Activated B cell treated with CpG ODN at 0.5 μM for 24 hours (primary cell): ENCODE measurements at regions of chr21 and their contacts with region 1.

Region 1: GRCh38 chr21:34908419-34909055 is 140.6 kb downstream of the RUNX1 start:
- DNase-seq: no peak
- ATAC-seq: peak; percentile 40
- H3K4me3 Mint-ChIP-seq: peak overlapping the region; percentile 3
- H3K27ac Mint-ChIP-seq: no peak overlapping the region
- H3K4me1 Mint-ChIP-seq: peaks cover 66% of the 10 kb centered on the region
- H3K27me3 Mint-ChIP-seq: no peaks in the 10 kb centered on the region
- CTCF ChIP-seq: no peak

Region 2: DNA sequence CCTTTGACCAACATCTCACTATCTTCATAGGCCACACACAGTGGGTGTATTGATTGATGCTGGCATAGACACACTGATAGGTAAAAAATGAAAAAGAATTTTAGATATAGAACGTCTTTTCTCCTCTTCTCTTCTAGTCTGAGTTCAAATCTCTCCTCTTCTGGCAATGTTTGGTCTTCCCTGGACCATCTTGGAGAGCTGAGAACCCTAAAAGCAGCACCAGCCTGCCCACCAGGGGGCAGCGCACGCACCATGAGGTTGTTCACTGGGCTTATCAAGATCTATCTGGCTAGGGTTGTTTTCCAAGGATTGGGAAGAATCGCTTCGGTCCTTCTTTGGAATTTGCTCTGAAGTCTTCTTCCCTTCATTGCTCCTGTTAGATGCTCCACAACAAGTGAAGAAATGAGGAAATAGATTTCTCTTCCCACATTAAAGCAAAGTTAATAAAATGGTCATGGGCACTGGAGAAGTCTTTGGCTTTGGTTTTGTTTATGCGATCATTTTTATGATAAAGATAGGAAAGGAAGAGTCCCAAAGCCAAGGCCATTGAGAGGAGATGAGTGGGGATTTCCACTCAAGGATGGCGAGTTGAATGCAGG is 1986.8 kb before region 1 on chr21:
- CTCF ChIA-PET with region 1: no interaction called
- POLR2A ChIA-PET with region 1: no interaction called
- intact Hi-C with region 1: no loop called
- DNase-seq: peak; percentile 26
- ATAC-seq: peak; percentile 40
- H3K4me3 Mint-ChIP-seq: no peak overlapping the region
- H3K27ac Mint-ChIP-seq: no peak overlapping the region
- H3K4me1 Mint-ChIP-seq: no peaks in the 10 kb centered on the region
- H3K27me3 Mint-ChIP-seq: peaks cover 20% of the 10 kb centered on the region
- CTCF ChIP-seq: peak; percentile 44

Region 3: GRCh38 chr21:34807881-34808568 is 100.5 kb before region 1 on chr21:
- CTCF ChIA-PET with region 1: no interaction called
- POLR2A ChIA-PET with region 1: no interaction called
- intact Hi-C with region 1: no loop called
- DNase-seq: no peak
- ATAC-seq: peak; percentile 13
- H3K4me3 Mint-ChIP-seq: no peak overlapping the region
- H3K27ac Mint-ChIP-seq: peak overlapping the region; percentile 71
- H3K4me1 Mint-ChIP-seq: peaks cover 46% of the 10 kb centered on the region
- H3K27me3 Mint-ChIP-seq: no peaks in the 10 kb centered on the region
- CTCF ChIP-seq: no peak

Region 4: DNA sequence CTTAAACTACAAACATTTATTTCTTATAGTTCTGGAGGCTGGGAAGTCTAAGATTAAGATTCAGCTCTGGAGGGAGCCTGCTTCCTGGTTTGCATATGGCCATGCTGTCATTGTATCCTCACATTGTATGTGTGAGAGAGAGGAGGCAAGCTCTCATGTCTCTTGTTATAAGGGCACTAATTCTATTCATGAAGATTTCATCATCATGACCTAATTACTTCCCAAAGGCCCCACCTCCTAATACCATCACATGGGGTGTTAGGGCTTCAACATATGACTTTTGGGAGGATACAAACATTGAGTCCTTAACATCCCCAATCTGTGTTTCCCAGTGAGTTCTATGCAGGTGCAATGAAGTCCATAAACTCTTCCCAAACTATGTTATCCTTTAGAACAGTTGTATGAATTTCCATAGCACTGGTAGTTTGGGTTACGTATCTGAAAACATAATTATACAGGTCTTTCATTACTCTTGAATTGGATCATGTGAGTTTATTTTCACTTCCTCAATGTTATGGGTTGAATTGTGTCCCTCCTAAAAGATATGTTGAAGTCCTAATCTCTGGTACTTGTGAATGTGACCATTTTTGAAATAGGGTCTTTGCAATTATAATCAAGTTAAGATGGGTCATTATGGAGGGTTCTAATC is 16.4 kb after region 1 on chr21:
- CTCF ChIA-PET with region 1: no interaction called
- POLR2A ChIA-PET with region 1: interaction called, 3 read pairs
- intact Hi-C with region 1: loop called (anchors 2 kb)
- DNase-seq: no peak
- ATAC-seq: peak; percentile 89
- H3K4me3 Mint-ChIP-seq: peak overlapping the region; percentile 66
- H3K27ac Mint-ChIP-seq: peak overlapping the region; percentile 78
- H3K4me1 Mint-ChIP-seq: peaks cover 67% of the 10 kb centered on the region
- H3K27me3 Mint-ChIP-seq: no peaks in the 10 kb centered on the region
- CTCF ChIP-seq: no peak

Region 5: GRCh38 chr21:35352066-35352770 is 443.7 kb after region 1 on chr21:
- CTCF ChIA-PET with region 1: no interaction called
- POLR2A ChIA-PET with region 1: no interaction called
- intact Hi-C with region 1: no loop called
- DNase-seq: no peak
- ATAC-seq: no peak
- H3K4me3 Mint-ChIP-seq: no peak overlapping the region
- H3K27ac Mint-ChIP-seq: no peak overlapping the region
- H3K4me1 Mint-ChIP-seq: no peaks in the 10 kb centered on the region
- H3K27me3 Mint-ChIP-seq: no peaks in the 10 kb centered on the region
- CTCF ChIP-seq: no peak